ENCODE measurements at regions of chr17 and their contacts with region 1.

Region 1: DNA sequence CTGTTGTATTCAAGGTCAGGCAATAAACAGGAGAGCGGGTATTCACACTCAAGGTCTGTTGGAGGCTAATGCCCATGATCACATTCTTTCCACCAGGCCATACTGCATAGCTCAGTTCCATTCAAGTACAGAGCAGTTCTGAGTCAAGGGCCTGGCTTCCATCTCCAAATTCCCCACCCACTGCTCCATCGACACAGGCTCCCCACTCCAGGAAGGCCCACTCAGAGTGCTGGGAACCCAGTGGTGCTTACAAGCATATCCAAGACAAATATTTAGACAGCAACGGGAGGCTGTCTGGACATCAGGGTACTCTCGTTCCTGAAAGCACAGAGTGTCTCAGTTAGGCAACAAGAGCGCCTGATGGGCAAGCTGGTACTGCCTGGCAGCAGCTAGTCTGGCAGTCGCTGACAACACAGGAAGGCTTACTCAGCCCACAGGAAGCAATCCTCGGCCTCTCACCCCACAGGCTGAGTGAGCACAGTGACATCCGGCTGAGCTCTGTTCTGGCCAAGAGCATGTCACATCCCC is 40.9 kb downstream of the RFFL start:
- DNase-seq: peak; percentile 93
- ATAC-seq: peak; percentile 100
- H3K4me3 Mint-ChIP-seq: peak overlapping the region; percentile 60
- H3K27ac Mint-ChIP-seq: peak overlapping the region; percentile 98
- H3K4me1 Mint-ChIP-seq: peaks cover 56% of the 10 kb centered on the region
- H3K27me3 Mint-ChIP-seq: no peaks in the 10 kb centered on the region

Region 2: GRCh38 chr17:34980681-34981537 is 41.7 kb before region 1 on chr17:
- CTCF ChIA-PET with region 1: interaction called, 10 read pairs
- DNase-seq: peak; percentile 88
- ATAC-seq: peak; percentile 92
- H3K4me3 Mint-ChIP-seq: peak overlapping the region; percentile 94
- H3K27ac Mint-ChIP-seq: peak overlapping the region; percentile 93
- H3K4me1 Mint-ChIP-seq: peaks cover 49% of the 10 kb centered on the region
- H3K27me3 Mint-ChIP-seq: no peaks in the 10 kb centered on the region

Region 3: GRCh38 chr17:34990921-34991365 is 31.7 kb before region 1 on chr17:
- CTCF ChIA-PET with region 1: interaction called, 17 read pairs
- DNase-seq: peak; percentile 56
- ATAC-seq: peak; percentile 74
- H3K4me3 Mint-ChIP-seq: peak overlapping the region; percentile 23
- H3K27ac Mint-ChIP-seq: peak overlapping the region; percentile 97
- H3K4me1 Mint-ChIP-seq: peaks cover 63% of the 10 kb centered on the region
- H3K27me3 Mint-ChIP-seq: no peaks in the 10 kb centered on the region

Region 4: GRCh38 chr17:35046740-35047283 is 24.2 kb after region 1 on chr17:
- CTCF ChIA-PET with region 1: interaction called, 13 read pairs
- DNase-seq: peak; percentile 86
- ATAC-seq: peak; percentile 96
- H3K4me3 Mint-ChIP-seq: peak overlapping the region; percentile 83
- H3K27ac Mint-ChIP-seq: peak overlapping the region; percentile 98
- H3K4me1 Mint-ChIP-seq: peaks cover 60% of the 10 kb centered on the region
- H3K27me3 Mint-ChIP-seq: no peaks in the 10 kb centered on the region

Region 5: GRCh38 chr17:35073991-35074627 is 51.5 kb after region 1 on chr17:
- CTCF ChIA-PET with region 1: interaction called, 11 read pairs
- DNase-seq: no peak
- ATAC-seq: peak; percentile 28
- H3K4me3 Mint-ChIP-seq: peak overlapping the region; percentile 31
- H3K27ac Mint-ChIP-seq: peak overlapping the region; percentile 80
- H3K4me1 Mint-ChIP-seq: peaks cover 68% of the 10 kb centered on the region
- H3K27me3 Mint-ChIP-seq: no peaks in the 10 kb centered on the region

Region 6: DNA sequence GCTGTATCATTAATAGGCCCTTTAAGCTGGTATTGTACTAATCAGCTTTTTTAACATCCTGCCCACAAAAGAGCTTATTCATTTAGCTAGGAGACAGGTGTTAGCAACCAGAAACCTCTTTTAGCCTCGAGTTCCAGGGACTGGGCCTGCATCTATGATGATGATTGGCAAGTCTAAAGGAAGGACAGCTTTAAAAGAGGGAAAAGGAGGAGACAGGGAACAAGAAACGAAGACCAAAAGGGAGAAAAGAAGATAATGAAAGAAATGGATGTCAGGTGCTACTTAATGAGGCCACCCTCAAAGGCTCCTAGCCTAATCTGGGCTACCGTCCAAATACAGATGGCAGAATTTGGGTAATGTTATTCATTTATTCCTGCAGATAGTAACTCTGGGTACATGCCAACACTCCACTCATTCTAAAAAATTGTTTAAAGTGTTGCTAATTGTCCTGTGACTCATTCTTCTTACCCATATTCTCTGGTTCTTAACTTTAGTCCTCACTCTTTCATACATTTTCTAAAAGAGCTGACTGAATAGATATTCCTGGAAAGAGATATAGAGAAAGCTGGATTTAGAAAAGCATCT is 59.6 kb after region 1 on chr17:
- CTCF ChIA-PET with region 1: interaction called, 17 read pairs
- DNase-seq: no peak
- ATAC-seq: peak; percentile 66
- H3K4me3 Mint-ChIP-seq: peak overlapping the region; percentile 54
- H3K27ac Mint-ChIP-seq: peak overlapping the region; percentile 92
- H3K4me1 Mint-ChIP-seq: peaks cover 85% of the 10 kb centered on the region
- H3K27me3 Mint-ChIP-seq: no peaks in the 10 kb centered on the region

Region 7: DNA sequence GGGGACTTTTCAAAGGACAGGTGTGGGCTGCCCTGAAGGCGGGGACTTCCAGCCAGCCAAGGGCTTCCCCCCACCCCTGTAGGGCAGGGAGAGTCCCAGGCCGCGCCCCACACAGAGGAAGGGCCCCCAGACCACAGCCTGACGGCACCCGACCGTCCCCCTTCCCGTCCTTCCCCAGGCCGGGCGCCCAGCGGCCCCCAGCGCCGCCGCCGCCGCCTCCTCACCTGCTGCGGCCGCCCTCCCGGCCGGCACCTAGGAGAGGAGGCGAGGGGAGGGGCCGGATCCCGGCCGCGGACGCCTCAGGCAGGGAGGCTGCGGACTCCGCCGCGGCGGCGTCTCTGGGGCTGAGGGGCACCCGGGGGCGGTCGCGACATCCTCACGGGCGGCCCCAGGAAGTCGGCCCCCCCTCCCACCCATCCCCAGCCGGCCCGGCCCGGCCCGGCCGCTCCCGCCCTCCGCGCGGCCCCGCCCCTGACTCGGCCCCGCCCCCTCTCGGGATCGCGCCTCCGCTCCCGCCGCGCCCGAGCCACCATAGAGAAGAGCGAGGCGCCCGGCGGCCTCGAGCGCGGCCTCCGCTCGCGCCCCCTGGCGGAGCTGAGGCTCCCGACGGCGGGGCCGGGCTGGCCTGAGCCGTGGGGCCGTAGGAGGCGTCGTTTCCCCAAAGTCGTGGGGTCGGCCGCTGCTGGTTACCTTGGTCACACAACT is 66.4 kb after region 1 on chr17:
- CTCF ChIA-PET with region 1: interaction called, 40 read pairs
- DNase-seq: peak; percentile 93
- ATAC-seq: peak; percentile 84
- H3K4me3 Mint-ChIP-seq: peak overlapping the region; percentile 92
- H3K27ac Mint-ChIP-seq: peak overlapping the region; percentile 96
- H3K4me1 Mint-ChIP-seq: peaks cover 52% of the 10 kb centered on the region
- H3K27me3 Mint-ChIP-seq: no peaks in the 10 kb centered on the region

Region 8: GRCh38 chr17:35104844-35105450 is 82.3 kb after region 1 on chr17:
- CTCF ChIA-PET with region 1: no interaction called
- DNase-seq: no peak
- ATAC-seq: no peak
- H3K4me3 Mint-ChIP-seq: no peak overlapping the region
- H3K27ac Mint-ChIP-seq: no peak overlapping the region
- H3K4me1 Mint-ChIP-seq: peaks cover 9% of the 10 kb centered on the region
- H3K27me3 Mint-ChIP-seq: no peaks in the 10 kb centered on the region

Region 9: GRCh38 chr17:35129154-35129972 is 106.8 kb after region 1 on chr17:
- CTCF ChIA-PET with region 1: no interaction called
- DNase-seq: no peak
- ATAC-seq: no peak
- H3K4me3 Mint-ChIP-seq: no peak overlapping the region
- H3K27ac Mint-ChIP-seq: no peak overlapping the region
- H3K4me1 Mint-ChIP-seq: no peaks in the 10 kb centered on the region
- H3K27me3 Mint-ChIP-seq: no peaks in the 10 kb centered on the region

Measured in activated CD8-positive, alpha-beta memory T cell treated with anti-CD3 and anti-CD28 coated beads, Interleukin-2, amount 10 ng/mL, durations not matched to agents 7 days and 5 days (primary cell).